ENCODE measurements at regions of chr1 and their contacts with region 1.

Region 1: GRCh38 chr1:119613769-119614720 is 34.0 kb downstream of the ZNF697 start:
- DNase-seq: peak; percentile 70
- H3K4me3 Mint-ChIP-seq: no peak overlapping the region
- H3K27ac Mint-ChIP-seq: no peak overlapping the region
- H3K4me1 Mint-ChIP-seq: peaks cover 17% of the 10 kb centered on the region
- H3K27me3 Mint-ChIP-seq: peaks cover 2% of the 10 kb centered on the region

Region 2: DNA sequence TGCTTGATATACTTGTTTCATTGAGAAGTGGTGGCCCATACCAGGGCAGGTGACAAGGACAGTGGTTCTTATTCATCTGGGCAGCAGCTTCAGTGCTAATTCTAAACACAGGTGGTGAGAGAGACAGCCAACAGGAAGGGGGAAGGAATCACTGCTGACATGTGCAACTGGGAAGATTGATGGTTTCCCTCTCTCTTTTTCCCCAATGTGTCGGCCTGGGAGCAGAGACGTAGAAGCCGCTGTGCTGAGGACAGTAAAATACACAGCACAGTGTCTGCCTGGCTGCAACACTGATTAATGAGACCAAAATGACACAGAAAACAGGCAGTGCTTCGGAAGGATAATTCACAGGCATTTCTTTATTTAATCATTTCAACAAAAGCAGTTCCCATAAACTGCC is 522.4 kb before region 1 on chr1:
- intact Hi-C with region 1: no loop called
- DNase-seq: no peak
- H3K4me3 Mint-ChIP-seq: no peak overlapping the region
- H3K27ac Mint-ChIP-seq: no peak overlapping the region
- H3K4me1 Mint-ChIP-seq: no peaks in the 10 kb centered on the region
- H3K27me3 Mint-ChIP-seq: no peaks in the 10 kb centered on the region

Region 3: GRCh38 chr1:119675349-119676345 is 61.6 kb after region 1 on chr1:
- intact Hi-C with region 1: loop called (anchors 1 kb)
- DNase-seq: peak; percentile 52
- H3K4me3 Mint-ChIP-seq: peak overlapping the region; percentile 63
- H3K27ac Mint-ChIP-seq: no peak overlapping the region
- H3K4me1 Mint-ChIP-seq: peaks cover 11% of the 10 kb centered on the region
- H3K27me3 Mint-ChIP-seq: peaks cover 27% of the 10 kb centered on the region

Region 4: DNA sequence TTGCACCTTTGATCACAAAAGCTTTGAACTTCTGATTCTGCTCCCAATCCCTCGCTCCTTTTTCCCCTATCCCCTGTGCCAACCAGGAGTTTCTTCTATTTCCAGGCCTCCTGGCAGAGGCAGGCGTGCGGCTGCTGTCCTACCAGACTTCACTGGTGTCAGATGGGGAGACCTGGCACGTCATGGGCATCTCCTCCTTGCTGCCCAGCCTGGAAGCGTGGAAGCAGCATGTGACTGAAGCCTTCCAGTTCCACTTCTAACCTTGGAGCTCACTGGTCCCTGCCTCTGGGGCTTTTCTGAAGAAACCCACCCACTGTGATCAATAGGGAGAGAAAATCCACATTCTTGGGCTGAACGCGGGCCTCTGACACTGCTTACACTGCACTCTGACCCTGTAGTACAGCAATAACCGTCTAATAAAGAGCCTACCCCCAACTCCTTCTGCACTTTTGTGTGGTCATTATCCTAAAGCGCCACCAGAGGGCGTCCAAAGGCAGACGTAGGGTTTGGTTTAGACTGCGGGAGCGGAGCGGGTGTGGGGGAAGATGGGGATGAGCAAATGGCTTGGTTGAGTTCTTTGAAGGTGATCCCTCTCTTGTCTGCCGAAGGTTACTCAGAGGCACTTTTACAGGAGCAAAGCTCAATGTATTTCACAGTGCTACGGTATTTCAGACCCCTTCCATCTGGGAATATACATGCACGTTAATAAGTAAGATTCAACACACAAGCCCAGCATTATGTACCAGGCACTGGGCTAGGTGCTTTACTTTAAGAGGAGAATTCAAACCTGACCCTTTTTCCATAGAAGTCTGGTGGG is 129.9 kb after region 1 on chr1:
- intact Hi-C with region 1: no loop called
- DNase-seq: peak; percentile 23
- H3K4me3 Mint-ChIP-seq: no peak overlapping the region
- H3K27ac Mint-ChIP-seq: no peak overlapping the region
- H3K4me1 Mint-ChIP-seq: peaks cover 10% of the 10 kb centered on the region
- H3K27me3 Mint-ChIP-seq: no peaks in the 10 kb centered on the region

Measured in activated T-helper 2 cell treated with anti-CD3 and anti-CD28 coated beads, Interferon-gamma antibody, Interleukin-2, Interleukin-4, amounts not matched to agents 10 μg/mL and 5 μg/mL and 100 μg/mL, durations not matched to agents 14 hours and 24 hours and 36 hours (primary cell).